Ascending aorta (tissue), 2 donors: ENCODE measurements at regions of chr7 and their contacts with region 1.

Region 1: DNA sequence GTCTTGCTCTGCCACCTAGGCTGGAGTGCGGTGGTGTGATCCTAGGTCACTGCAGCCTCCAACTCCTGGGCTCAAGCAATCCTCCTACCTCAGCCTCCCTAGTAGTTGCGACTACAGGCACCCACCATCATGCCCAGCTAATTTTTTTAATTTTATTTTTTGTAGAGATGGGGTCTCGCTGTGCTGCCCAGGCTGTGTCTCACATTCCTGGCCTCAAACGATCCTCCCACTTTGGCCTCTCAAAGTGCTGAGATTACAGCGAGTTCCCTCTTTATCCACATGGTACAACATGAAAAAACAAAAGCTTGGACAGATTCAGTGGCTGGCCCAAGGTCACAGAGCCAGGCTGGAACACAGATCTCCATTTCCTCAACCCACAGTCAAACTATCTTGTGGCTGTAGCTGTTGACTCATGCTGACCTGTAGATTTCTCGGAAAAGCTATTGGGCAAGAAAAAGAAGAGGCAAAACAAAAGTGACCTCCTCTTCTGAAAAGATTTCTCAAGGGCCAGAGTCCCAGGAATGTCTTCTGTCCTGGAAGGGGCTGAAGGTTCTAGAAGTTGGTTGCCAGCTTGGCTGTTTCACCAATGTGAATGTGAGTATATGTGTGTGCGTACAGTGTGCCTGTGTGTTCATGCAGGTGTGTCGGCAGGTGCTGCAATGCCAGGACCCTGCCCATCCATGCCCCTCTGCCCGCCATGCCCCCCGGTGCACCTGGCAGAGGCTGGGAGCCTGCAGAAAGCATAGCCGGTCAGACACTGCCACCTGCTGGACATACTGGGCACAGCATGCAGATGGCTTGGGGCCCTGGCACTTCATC is 28.4 kb downstream of the TMEM130 start:
- DNase-seq: peak in 1 of 2 donors; percentile 86
- H3K4me3 ChIP-seq: no peak overlapping the region
- H3K27ac ChIP-seq: peak overlapping the region; percentile 55 to 61
- H3K4me1 ChIP-seq: peaks cover 0 to 11% of the 10 kb centered on the region in 2 donors
- H3K27me3 ChIP-seq: no peaks in the 10 kb centered on the region
- CTCF ChIP-seq: peak; percentile 96 to 100 (median 99)

Region 2: DNA sequence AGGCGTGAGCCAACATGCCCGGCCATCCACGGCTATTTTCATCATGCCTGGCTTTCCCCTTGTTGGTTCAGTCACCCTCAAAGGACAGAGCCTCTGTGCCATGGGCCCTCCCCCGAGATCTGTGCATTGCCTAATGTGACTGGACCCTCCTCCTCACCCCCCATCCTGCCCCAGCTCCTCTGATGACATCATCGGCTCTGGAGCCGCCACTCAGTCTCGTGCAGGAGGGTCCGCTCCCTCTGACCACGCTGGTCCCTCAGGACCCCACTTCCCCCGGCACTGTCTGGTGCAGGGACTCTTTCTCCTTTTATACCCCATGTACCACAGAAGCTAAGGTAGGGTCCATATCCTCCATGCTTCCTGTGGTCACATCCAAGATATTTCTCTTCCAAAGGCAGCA is 407.3 kb before region 1 on chr7:
- intact Hi-C with region 1: loop called (anchors 1 kb)
- DNase-seq: no peak
- H3K4me3 ChIP-seq: no peak overlapping the region
- H3K27ac ChIP-seq: no peak overlapping the region
- H3K4me1 ChIP-seq: no peaks in the 10 kb centered on the region
- H3K27me3 ChIP-seq: no peaks in the 10 kb centered on the region
- CTCF ChIP-seq: no peak

Region 3: DNA sequence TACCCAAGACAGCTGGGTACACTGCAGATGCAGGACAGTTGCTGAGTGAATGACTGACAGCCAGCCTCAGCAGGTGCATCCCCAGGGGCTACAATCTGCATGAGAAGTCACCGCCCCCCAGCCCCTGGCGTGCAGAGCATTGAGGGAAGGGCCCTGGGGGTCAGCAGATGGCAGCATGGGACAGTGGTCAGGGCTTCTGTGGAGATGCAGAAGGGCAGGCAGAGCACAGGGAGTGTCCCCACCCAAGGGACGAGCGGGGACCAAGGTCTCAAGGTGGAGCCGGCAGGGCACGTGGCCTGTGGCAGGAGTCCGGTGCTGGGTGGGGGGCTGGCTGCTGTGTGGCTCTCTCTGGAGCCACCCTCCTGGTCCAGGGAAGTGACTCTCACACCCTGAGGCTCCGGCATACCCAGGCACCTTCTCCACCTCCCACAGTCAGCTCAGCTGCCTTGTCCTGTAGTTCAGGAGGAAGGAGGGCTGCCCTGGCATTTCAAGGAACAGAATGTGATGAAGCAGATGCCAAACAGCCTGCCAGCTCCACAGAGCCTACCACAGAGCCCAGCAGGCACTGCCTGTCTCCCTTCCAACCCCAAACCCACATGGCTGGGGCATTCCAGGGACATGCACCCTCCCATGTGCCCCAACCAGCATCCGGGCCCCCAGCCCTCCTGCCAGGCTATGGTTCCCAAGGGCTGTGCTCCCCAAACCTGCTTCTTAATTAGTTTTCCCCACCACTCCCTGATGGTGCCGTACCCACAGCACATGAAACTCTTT is 86.1 kb before region 1 on chr7:
- intact Hi-C with region 1: loop called (anchors 1 kb)
- DNase-seq: peak; percentile 47 to 77
- H3K4me3 ChIP-seq: peak overlapping the region in 1 of 2 donors; percentile 14
- H3K27ac ChIP-seq: peak overlapping the region; percentile 71 to 78
- H3K4me1 ChIP-seq: peaks cover 19 to 22% of the 10 kb centered on the region in 2 donors
- H3K27me3 ChIP-seq: no peaks in the 10 kb centered on the region
- CTCF ChIP-seq: peak; percentile 20 to 35 (median 27)

Region 4: GRCh38 chr7:98870121-98870651 is 28.8 kb after region 1 on chr7:
- intact Hi-C with region 1: loop called (anchors 2 kb)
- DNase-seq: peak in 1 of 2 donors; percentile 83
- H3K4me3 ChIP-seq: peak overlapping the region; percentile 65 to 83
- H3K27ac ChIP-seq: peak overlapping the region in 1 of 2 donors; percentile 69
- H3K4me1 ChIP-seq: peaks cover 4 to 19% of the 10 kb centered on the region in 2 donors
- H3K27me3 ChIP-seq: no peaks in the 10 kb centered on the region
- CTCF ChIP-seq: no peak

Region 5: DNA sequence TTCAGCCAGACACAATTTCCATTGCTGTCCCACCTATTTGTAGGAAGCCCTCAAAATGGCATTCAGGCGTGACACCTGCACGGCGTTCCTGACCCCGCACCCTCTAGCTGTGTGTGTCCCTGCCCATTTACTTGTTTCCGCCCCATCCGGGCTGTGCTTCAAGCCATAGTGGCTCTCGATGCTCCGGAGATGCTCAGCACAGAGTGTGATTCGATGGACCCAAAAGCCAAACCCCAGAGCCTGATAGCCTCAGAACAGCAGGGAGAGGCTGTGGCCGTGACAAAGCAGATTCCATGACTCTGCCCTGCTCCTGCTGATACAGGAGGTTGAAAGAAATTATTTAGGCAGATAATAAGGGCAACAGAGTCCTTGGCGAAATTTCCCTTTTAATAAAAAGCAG is 580.8 kb after region 1 on chr7:
- intact Hi-C with region 1: no loop called
- DNase-seq: no peak
- H3K4me3 ChIP-seq: no peak overlapping the region
- H3K27ac ChIP-seq: no peak overlapping the region
- H3K4me1 ChIP-seq: no peaks in the 10 kb centered on the region
- H3K27me3 ChIP-seq: no peaks in the 10 kb centered on the region
- CTCF ChIP-seq: no peak